ENCODE measurements at regions of chr14 and their contacts with region 1.

Region 1: GRCh38 chr14:94136575-94137331 is 7.3 kb upstream of the IFI27L2 start:
- DNase-seq: peak; percentile 55 to 77 (median 58)
- ATAC-seq: peak; percentile 94
- H3K4me3 ChIP-seq: no peak overlapping the region
- H3K27ac ChIP-seq: no peak overlapping the region
- H3K4me1 ChIP-seq: no peaks in the 10 kb centered on the region; a peak in 2 of 5 replicates
- H3K27me3 ChIP-seq: peaks cover 0 to 15% of the 10 kb centered on the region in 2 experiments; a peak in 2 of 5 replicates
- CTCF ChIP-seq: peak; percentile 87 to 90 (median 89)
- EP300 ChIP-seq: no peak
- POLR2A ChIP-seq: no peak
- RAD21 ChIP-seq: peak; percentile 71 to 83

Region 2: GRCh38 chr14:94036313-94037050 is 100.3 kb before region 1 on chr14:
- CTCF ChIA-PET with region 1: interaction called, 16 read pairs
- POLR2A ChIA-PET with region 1: no interaction called
- in situ Hi-C with region 1: loop called (anchors 5 kb)
- intact Hi-C with region 1: loop called (anchors 1 kb)
- DNase-seq: peak; percentile 65 to 70 (median 68)
- ATAC-seq: peak; percentile 97
- H3K4me3 ChIP-seq: no peak overlapping the region
- H3K27ac ChIP-seq: no peak overlapping the region
- H3K4me1 ChIP-seq: no peaks in the 10 kb centered on the region
- H3K27me3 ChIP-seq: peaks cover 4 to 24% of the 10 kb centered on the region in 2 experiments; a peak in 4 of 5 replicates
- CTCF ChIP-seq: peak; percentile 80 to 84 (median 84)
- EP300 ChIP-seq: no peak
- POLR2A ChIP-seq: no peak
- RAD21 ChIP-seq: peak; percentile 33 to 71

Region 3: GRCh38 chr14:94051115-94051514 is 85.6 kb before region 1 on chr14:
- CTCF ChIA-PET with region 1: interaction called, 14 read pairs
- POLR2A ChIA-PET with region 1: interaction called, 4 read pairs
- in situ Hi-C with region 1: no loop called
- intact Hi-C with region 1: no loop called
- DNase-seq: peak in 1 of 4 experiments; percentile 12
- ATAC-seq: peak; percentile 38; the same call in 1 of the 3 replicates
- H3K4me3 ChIP-seq: no peak overlapping the region
- H3K27ac ChIP-seq: no peak overlapping the region
- H3K4me1 ChIP-seq: no peaks in the 10 kb centered on the region
- H3K27me3 ChIP-seq: no peaks in the 10 kb centered on the region
- CTCF ChIP-seq: peak in 1 of 3 experiments; percentile 27; a peak in 2 of 6 replicates
- EP300 ChIP-seq: no peak
- POLR2A ChIP-seq: no peak
- RAD21 ChIP-seq: peak in 1 of 2 experiments; percentile 25; a peak in 1 of 4 replicates

Region 4: DNA sequence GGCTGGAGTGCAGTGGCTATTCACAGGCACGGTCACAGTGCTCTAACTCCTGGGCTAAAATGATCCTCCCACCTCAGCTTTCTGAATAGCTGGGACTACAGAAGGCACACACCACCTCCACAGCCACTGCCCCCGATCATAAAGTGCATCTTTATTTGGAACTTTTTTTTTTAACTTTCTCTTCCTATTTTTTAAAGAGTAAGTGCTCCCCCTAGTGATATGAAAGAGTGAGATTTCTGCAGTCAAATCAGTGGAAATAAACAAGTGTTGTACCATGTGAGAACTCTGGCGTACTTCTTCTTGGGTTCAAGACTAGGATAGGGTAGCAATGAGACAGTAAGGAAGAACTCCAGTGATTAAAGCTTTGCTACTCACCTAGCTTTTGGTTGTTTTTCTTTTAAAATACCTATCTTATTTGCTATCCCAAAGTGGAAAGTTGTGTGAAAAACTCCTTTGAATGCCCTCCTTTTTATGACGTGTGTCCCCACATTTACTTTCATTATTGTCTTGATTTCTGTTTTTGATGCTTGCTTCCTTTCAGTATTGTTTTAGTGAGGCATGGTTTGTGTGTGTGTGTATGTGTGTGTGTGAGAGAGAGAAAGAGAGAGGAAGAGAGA is 44.0 kb after region 1 on chr14:
- CTCF ChIA-PET with region 1: interaction called, 15 read pairs
- POLR2A ChIA-PET with region 1: no interaction called
- in situ Hi-C with region 1: no loop called
- intact Hi-C with region 1: loop called (anchors 2 kb)
- DNase-seq: peak in 2 of 4 experiments; percentile 12 to 29
- ATAC-seq: peak; percentile 69
- H3K4me3 ChIP-seq: no peak overlapping the region
- H3K27ac ChIP-seq: no peak overlapping the region
- H3K4me1 ChIP-seq: no peaks in the 10 kb centered on the region
- H3K27me3 ChIP-seq: no peaks in the 10 kb centered on the region; a peak in 2 of 5 replicates
- CTCF ChIP-seq: peak; percentile 29 to 61 (median 32); a peak in 3 of 6 replicates
- EP300 ChIP-seq: no peak
- POLR2A ChIP-seq: no peak
- RAD21 ChIP-seq: peak; percentile 25 to 58; a peak in 3 of 4 replicates